ENCODE measurements at regions of chr3 and their contacts with region 1.

Region 1: GRCh38 chr3:187319699-187320302 is 28.3 kb upstream of the MASP1 start:
- DNase-seq: peak; percentile 34
- H3K4me3 ChIP-seq: no peak overlapping the region
- H3K27ac ChIP-seq: no peak overlapping the region
- H3K27me3 ChIP-seq: peaks cover 15% of the 10 kb centered on the region
- CTCF ChIP-seq: peak; percentile 93

Region 2: DNA sequence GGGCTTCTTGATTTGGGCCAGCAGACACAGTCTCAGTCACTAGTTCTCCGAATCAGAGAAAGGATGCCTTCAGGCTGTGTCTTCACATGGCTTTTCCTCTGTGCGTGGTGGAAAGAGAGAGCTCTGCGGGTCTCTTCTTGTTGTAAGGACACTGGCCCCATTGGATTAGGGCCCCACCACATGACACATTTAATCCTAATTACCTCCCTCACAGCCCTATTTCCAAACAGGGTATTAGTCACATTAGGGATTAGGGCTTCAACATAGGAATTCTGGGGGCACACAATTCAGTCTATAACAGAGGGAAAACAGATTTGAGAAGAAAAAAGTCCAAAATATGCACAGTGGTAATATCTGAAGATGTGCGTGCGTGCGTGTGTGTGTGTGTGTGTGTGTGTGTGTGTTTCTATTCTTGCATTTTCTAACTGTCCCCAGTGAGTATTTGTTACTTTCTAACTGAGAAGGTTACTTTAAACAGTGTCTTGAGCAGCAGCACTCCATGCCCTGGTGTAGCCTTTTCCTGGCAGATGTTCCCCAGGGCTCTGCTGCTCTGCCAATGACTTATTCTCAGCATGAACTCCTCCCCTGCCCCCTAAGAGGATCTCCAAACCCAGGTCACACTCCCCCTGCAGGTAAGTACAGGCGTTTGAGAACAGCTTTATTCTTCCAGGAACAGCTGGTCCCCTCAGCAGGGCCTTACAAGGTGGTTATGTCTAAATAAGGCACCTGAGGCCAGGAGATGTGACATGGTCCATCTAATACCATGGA is 253.4 kb before region 1 on chr3:
- CTCF ChIA-PET with region 1: no interaction called
- POLR2A ChIA-PET with region 1: no interaction called
- DNase-seq: no peak
- H3K4me3 ChIP-seq: no peak overlapping the region
- H3K27ac ChIP-seq: no peak overlapping the region
- H3K27me3 ChIP-seq: no peaks in the 10 kb centered on the region
- CTCF ChIP-seq: peak; percentile 45; the same call in 1 of the 2 replicates

Region 3: DNA sequence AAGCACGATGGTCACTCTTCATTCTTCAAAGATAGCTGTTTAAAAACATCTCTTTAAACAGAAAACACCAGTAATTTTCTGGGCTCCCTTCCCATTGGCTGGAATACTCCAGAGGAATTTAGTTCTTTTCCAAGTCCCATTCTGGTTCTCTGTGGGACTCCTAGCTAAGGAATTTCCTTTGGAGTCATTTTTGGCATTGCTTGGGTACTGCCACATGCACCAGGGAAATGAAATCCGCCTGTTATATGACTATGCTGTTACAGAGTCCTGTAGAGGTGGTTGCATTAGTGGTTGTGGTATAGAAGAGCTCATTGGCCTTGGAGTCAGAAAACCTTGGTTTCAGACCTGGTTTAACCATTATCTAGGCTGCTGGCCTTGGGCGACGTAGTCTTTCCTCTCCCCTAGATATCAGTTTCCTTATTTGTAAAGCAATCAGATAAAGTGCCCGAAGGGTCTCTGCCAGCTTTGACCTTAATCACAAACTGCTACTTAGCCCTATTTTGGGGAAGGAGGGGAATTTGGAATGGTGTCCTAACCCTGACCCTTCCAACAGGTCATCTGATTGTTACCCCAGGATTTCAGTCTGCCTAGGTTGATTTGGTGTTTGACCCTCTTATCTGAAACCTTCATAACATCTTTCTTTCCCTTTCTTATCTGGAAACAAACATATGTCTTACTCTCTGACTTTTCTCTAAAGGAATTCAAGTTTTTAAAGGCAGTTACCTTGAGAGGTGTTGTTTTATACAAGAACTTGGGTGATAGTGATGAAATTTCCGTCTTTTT is 109.1 kb before region 1 on chr3:
- CTCF ChIA-PET with region 1: interaction called, 241 read pairs
- POLR2A ChIA-PET with region 1: no interaction called
- DNase-seq: no peak
- H3K4me3 ChIP-seq: no peak overlapping the region
- H3K27ac ChIP-seq: no peak overlapping the region
- H3K27me3 ChIP-seq: no peaks in the 10 kb centered on the region
- CTCF ChIP-seq: no peak

Region 4: GRCh38 chr3:187264021-187264420 is 55.8 kb before region 1 on chr3:
- CTCF ChIA-PET with region 1: interaction called, 21 read pairs
- POLR2A ChIA-PET with region 1: no interaction called
- DNase-seq: peak; percentile 57
- H3K4me3 ChIP-seq: no peak overlapping the region
- H3K27ac ChIP-seq: no peak overlapping the region
- H3K27me3 ChIP-seq: no peaks in the 10 kb centered on the region
- CTCF ChIP-seq: no peak

Region 5: GRCh38 chr3:187340578-187340977 is 20.8 kb after region 1 on chr3:
- CTCF ChIA-PET with region 1: interaction called, 17 read pairs
- POLR2A ChIA-PET with region 1: no interaction called
- DNase-seq: no peak
- H3K4me3 ChIP-seq: no peak overlapping the region
- H3K27ac ChIP-seq: no peak overlapping the region
- H3K27me3 ChIP-seq: peaks cover 18% of the 10 kb centered on the region
- CTCF ChIP-seq: no peak

Region 6: GRCh38 chr3:187445356-187445755 is 125.6 kb after region 1 on chr3:
- CTCF ChIA-PET with region 1: no interaction called
- POLR2A ChIA-PET with region 1: no interaction called
- DNase-seq: no peak
- H3K4me3 ChIP-seq: no peak overlapping the region
- H3K27ac ChIP-seq: no peak overlapping the region
- H3K27me3 ChIP-seq: no peaks in the 10 kb centered on the region
- CTCF ChIP-seq: no peak

Region 7: DNA sequence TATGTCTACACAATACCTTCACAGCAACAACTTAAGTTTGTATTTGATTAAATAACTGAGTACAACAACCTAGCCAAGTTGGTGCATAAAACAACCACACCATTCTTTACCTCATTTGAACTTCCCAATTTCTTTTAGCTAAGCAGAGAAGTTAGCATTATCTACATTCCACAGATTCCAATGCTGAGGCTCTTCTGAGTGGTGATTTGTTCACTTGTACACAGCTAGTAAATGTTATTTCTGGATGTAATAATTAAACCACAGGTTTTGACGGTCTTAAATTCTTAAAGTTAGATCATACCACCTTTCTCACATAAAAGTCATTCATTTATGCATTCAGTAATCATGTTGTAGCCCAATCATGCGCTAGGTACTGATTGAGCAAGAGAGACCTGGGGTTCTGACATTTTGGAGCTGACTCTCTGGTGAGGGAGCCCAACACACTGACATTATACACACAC is 247.9 kb after region 1 on chr3:
- CTCF ChIA-PET with region 1: interaction called, 13 read pairs
- POLR2A ChIA-PET with region 1: no interaction called
- DNase-seq: peak; percentile 23
- H3K4me3 ChIP-seq: no peak overlapping the region
- H3K27ac ChIP-seq: peak overlapping the region; percentile 66
- H3K27me3 ChIP-seq: no peaks in the 10 kb centered on the region
- CTCF ChIP-seq: no peak

Region 8: DNA sequence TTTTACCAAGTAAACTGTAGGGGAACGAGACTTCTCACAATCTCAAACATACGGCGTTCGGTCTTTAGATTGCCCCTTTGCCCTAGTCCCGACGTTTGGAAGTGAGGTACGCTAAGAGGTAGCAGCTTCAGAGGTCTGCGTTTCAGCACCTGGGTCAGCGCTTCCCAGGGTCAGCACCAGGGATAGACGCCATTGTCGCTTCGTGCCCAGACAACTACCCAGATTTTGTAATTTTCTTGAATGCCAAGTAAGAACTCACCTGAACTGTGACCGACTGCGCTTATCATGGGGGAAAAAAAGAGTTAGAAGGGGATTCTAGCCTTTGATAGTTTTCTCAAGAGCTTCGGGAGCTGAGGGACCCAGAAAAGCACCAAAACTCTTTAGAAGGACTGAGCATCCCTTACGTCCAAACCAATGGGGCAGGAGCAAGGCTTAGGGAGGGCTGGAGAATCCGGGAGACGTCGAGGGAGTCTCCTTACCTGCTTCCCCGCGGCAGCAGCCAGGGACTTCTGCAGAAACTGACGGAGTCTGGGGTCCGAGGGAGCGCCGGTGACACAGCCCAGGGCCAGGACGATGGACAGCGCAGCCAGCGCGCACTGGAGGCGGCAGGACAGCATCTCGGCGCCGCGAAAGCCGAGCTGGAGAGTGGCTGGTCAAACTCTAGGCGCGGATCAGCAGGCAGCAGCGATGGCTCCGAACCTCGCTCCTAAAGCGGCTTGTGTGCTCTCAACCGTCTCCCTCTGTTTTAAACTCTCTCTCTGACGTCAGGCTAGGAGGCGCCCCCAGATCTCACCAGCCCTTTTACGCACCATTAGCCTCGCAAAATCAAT is 350.1 kb after region 1 on chr3 and contains the start of gene SST:
- CTCF ChIA-PET with region 1: interaction called, 696 read pairs
- POLR2A ChIA-PET with region 1: no interaction called
- DNase-seq: no peak
- H3K4me3 ChIP-seq: no peak within 1 kb of the TSS
- H3K27ac ChIP-seq: no peak within 1 kb of the TSS
- H3K27me3 ChIP-seq: peaks cover 21% of the 10 kb centered on the region
- CTCF ChIP-seq: no peak
- polyA plus RNA-seq, gene SST: not detected in 2 replicates

Region 9: GRCh38 chr3:187714404-187714979 is 394.7 kb after region 1 on chr3:
- CTCF ChIA-PET with region 1: interaction called, 119 read pairs
- POLR2A ChIA-PET with region 1: no interaction called
- DNase-seq: peak; percentile 37
- H3K4me3 ChIP-seq: no peak overlapping the region
- H3K27ac ChIP-seq: no peak overlapping the region
- H3K27me3 ChIP-seq: peaks cover 7% of the 10 kb centered on the region
- CTCF ChIP-seq: peak; percentile 98